ENCODE measurements at regions of chr19 and their contacts with region 1.

Region 1: GRCh38 chr19:572140-572742 is at the start of gene BSG:
- DNase-seq: peak; percentile 99 to 100
- ATAC-seq: peak; percentile 77 to 92 (median 87)
- H3K4me3 ChIP-seq: peak within 1 kb of the TSS; percentile 84
- H3K4me3 Mint-ChIP-seq: peak within 1 kb of the TSS; percentile 97
- H3K27ac ChIP-seq: peak within 1 kb of the TSS; percentile 93
- H3K27ac Mint-ChIP-seq: peak within 1 kb of the TSS; percentile 88 to 92
- H3K4me1 ChIP-seq: peaks cover 52% of the 10 kb centered on the region
- H3K4me1 Mint-ChIP-seq: peaks cover 31 to 54% of the 10 kb centered on the region in 2 donors
- H3K27me3 ChIP-seq: no peaks in the 10 kb centered on the region
- H3K27me3 Mint-ChIP-seq: no peaks in the 10 kb centered on the region
- CTCF ChIP-seq: no peak
- total RNA-seq, gene BSG: 229 to 248 (median 236) TPM

Region 2: GRCh38 chr19:531009-531752 is 41.1 kb before region 1 on chr19:
- intact Hi-C with region 1: loop called (anchors 5 kb)
- DNase-seq: peak; percentile 95 to 98
- ATAC-seq: peak; percentile 73 to 87 (median 77)
- H3K4me3 ChIP-seq: peak overlapping the region; percentile 78
- H3K4me3 Mint-ChIP-seq: peak overlapping the region; percentile 83
- H3K27ac ChIP-seq: peak overlapping the region; percentile 79
- H3K27ac Mint-ChIP-seq: peak overlapping the region; percentile 54 to 89
- H3K4me1 ChIP-seq: peaks cover 36% of the 10 kb centered on the region
- H3K4me1 Mint-ChIP-seq: peaks cover 12 to 18% of the 10 kb centered on the region in 2 donors
- H3K27me3 ChIP-seq: no peaks in the 10 kb centered on the region
- H3K27me3 Mint-ChIP-seq: no peaks in the 10 kb centered on the region
- CTCF ChIP-seq: no peak

Region 3: DNA sequence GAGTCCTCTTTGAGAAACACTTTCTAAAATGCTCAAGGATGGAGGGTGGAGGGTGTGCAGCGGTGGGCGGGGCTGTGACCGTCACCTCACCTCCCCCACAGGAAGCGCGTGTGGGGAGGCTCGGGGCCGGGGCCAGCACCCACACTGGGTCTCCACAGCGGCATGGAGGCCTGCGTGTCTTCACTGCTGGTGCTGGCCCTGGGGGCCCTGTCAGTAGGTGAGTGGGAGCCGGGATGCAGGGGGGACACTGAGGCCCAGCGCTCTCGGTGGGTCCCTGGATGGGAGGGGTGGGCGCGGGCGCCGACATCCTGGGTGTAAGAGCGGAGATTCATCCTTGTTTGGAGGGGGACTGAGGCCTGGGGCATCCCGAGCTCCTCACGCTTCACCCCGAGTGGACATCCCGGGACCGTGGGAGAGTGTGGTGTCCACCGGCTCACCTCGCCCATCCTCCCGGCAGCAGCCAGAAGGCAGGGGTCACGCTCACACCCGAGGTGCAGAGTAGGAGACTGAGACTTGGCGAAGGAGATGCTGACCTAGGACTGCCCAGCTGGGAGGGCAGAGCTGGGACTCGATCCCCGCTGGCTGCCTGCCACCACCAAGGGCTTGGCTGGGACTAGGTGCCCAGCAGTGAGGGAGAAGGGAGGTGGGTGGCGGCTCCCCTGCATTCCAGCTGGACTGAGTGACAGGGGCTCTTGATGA is 28.2 kb before region 1 on chr19 and contains the start of gene GZMM:
- intact Hi-C with region 1: loop called (anchors 1 kb)
- DNase-seq: peak; percentile 87 to 93
- ATAC-seq: peak; percentile 94 to 98 (median 94)
- H3K4me3 ChIP-seq: peak within 1 kb of the TSS; percentile 82
- H3K4me3 Mint-ChIP-seq: peak within 1 kb of the TSS; percentile 90
- H3K27ac ChIP-seq: peak within 1 kb of the TSS; percentile 85
- H3K27ac Mint-ChIP-seq: peak within 1 kb of the TSS; percentile 90 to 98
- H3K4me1 ChIP-seq: peaks cover 46% of the 10 kb centered on the region
- H3K4me1 Mint-ChIP-seq: peaks cover 13 to 30% of the 10 kb centered on the region in 2 donors
- H3K27me3 ChIP-seq: no peaks in the 10 kb centered on the region
- H3K27me3 Mint-ChIP-seq: no peaks in the 10 kb centered on the region
- CTCF ChIP-seq: no peak
- total RNA-seq, gene GZMM: 186 to 286 (median 253) TPM